Naive thymus-derived CD4-positive, alpha-beta T cell (primary cell): ENCODE measurements at regions of chr3 and their contacts with region 1.

Region 1: GRCh38 chr3:40476478-40477470 is at the start of gene ZNF619:
- DNase-seq: peak; percentile 11 to 60 (median 47)
- ATAC-seq: peak; percentile 93
- H3K4me3 ChIP-seq: peak within 1 kb of the TSS; percentile 82
- H3K4me3 Mint-ChIP-seq: peak within 1 kb of the TSS; percentile 84 to 97 (median 89)
- H3K27ac ChIP-seq: peak within 1 kb of the TSS; percentile 80
- H3K27ac Mint-ChIP-seq: peak within 1 kb of the TSS; percentile 61 to 97 (median 90)
- H3K4me1 ChIP-seq: peaks cover 7 to 8% of the 10 kb centered on the region in 2 donors
- H3K4me1 Mint-ChIP-seq: peaks cover 13 to 38% (median 31%) of the 10 kb centered on the region in 7 donors
- H3K27me3 ChIP-seq: no peaks in the 10 kb centered on the region
- H3K27me3 Mint-ChIP-seq: no peaks in the 10 kb centered on the region
- total RNA-seq, gene ZNF619: 5.0 to 13.9 (median 12.3) TPM

Region 2: DNA sequence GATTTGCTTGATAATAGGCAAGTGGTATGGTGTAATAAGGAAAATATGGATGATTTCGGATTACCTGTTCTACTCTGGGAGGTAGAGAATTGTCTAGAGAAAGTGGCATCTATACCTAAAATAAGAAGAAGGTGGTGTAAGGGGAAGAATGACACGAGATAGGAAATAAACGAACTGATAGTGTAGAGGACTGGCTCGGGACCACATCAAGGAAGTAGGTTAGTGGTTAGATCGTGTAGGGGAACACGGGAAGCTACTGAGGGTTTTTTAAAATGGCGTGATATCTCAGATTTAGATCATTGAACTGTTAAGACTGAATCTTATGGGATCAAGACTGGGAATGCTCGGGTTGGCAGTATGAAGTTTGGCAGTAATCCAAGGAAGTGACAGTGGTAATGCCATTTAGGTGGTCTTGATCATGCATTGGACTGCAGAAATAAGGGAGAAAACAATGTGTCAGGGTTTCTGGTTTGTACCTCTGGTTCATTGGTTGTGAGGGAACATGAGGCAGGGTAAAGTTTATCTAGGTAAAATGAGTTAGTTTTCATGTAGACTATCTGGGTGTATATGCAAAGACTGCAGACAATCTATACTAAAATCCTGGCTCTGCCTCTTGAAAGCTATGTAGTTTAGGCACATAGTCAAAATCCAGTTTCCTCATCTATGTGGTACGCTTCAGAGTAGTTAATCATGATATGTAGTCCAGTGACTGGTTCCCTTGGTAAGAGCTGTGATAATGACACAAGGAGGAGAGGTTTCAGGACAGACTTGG is 12.2 kb before region 1 on chr3:
- CTCF ChIA-PET with region 1: no interaction called
- POLR2A ChIA-PET with region 1: interaction called, 15 read pairs
- intact Hi-C with region 1: no loop called
- DNase-seq: peak in 7 of 9 donors; percentile 46 to 72 (median 65)
- ATAC-seq: peak; percentile 93
- H3K4me3 ChIP-seq: no peak overlapping the region
- H3K4me3 Mint-ChIP-seq: peak overlapping the region; percentile 6 to 67 (median 42)
- H3K27ac ChIP-seq: peak overlapping the region; percentile 43
- H3K27ac Mint-ChIP-seq: peak overlapping the region; percentile 35 to 90 (median 80)
- H3K4me1 ChIP-seq: peaks cover 13 to 20% of the 10 kb centered on the region in 2 donors
- H3K4me1 Mint-ChIP-seq: peaks cover 13 to 42% (median 34%) of the 10 kb centered on the region in 7 donors
- H3K27me3 ChIP-seq: no peaks in the 10 kb centered on the region
- H3K27me3 Mint-ChIP-seq: no peaks in the 10 kb centered on the region

Region 3: DNA sequence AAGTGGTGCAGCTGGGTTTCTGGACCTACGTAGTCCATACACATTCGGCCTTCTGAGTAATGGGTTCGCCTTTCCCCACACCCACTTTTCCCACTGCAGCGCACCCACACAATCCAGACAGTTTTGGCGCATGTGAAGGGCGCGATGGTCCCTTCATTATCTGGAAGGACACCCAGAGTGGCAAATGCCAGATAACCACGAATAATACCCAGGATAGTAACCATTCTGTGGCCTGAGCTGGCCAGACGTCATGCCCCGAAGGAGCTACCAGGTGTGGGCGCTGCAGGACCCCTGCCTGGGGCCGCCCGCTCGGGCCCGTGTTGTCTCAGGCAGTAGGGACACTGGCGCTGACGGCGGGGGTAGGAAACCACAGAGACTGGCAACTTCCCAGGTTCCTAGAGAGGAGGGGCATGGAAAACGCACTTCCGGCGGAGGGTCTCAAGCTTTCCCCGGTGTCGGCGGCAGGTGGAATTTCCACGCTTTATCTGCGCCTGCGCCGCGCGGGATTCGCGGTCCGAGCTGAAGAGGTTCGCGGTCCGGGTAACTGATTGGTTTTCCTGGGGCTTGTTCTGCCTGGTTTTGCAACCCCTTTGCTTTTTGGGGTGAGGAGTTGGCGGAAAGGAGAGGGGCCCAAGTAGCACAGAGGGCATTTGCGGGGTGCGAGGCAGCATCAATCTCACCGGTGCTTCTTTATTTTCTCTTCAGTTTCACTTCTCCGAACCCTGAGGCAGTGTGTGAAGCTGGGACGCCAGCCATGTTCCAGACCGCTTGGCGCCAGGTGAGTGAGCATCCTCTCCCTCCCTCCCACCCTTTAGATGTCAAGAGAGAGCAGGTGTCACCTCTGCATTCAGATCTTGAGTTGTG is 29.1 kb after region 1 on chr3 and contains the start of gene ZNF620:
- CTCF ChIA-PET with region 1: no interaction called
- POLR2A ChIA-PET with region 1: interaction called, 5 read pairs
- intact Hi-C with region 1: loop called (anchors 1 kb)
- DNase-seq: peak; percentile 11 to 57 (median 29)
- ATAC-seq: peak; percentile 82
- H3K4me3 ChIP-seq: peak within 1 kb of the TSS; percentile 88
- H3K4me3 Mint-ChIP-seq: peak within 1 kb of the TSS; percentile 86 to 98 (median 97)
- H3K27ac ChIP-seq: peak within 1 kb of the TSS; percentile 61
- H3K27ac Mint-ChIP-seq: peak within 1 kb of the TSS; percentile 67 to 94 (median 86)
- H3K4me1 ChIP-seq: peaks cover 5% of the 10 kb centered on the region in 2 donors
- H3K4me1 Mint-ChIP-seq: peaks cover 6 to 27% (median 9%) of the 10 kb centered on the region in 7 donors
- H3K27me3 ChIP-seq: no peaks in the 10 kb centered on the region
- H3K27me3 Mint-ChIP-seq: peaks cover 0 to 12% (median 0%) of the 10 kb centered on the region in 5 donors
- total RNA-seq, gene ZNF620: 1.3 to 6.4 (median 3.3) TPM

Region 4: GRCh38 chr3:40524568-40525285 is 48.0 kb after region 1 on chr3 and contains the start of gene ZNF621:
- CTCF ChIA-PET with region 1: no interaction called
- POLR2A ChIA-PET with region 1: interaction called, 7 read pairs
- intact Hi-C with region 1: loop called (anchors 1 kb)
- DNase-seq: peak; percentile 43 to 90 (median 73)
- ATAC-seq: peak; percentile 99
- H3K4me3 ChIP-seq: peak within 1 kb of the TSS; percentile 69
- H3K4me3 Mint-ChIP-seq: peak within 1 kb of the TSS; percentile 85 to 97 (median 96)
- H3K27ac ChIP-seq: peak within 1 kb of the TSS; percentile 81
- H3K27ac Mint-ChIP-seq: peak within 1 kb of the TSS; percentile 91 to 98 (median 97)
- H3K4me1 ChIP-seq: peaks cover 0 to 15% of the 10 kb centered on the region in 2 donors
- H3K4me1 Mint-ChIP-seq: peaks cover 17 to 39% (median 27%) of the 10 kb centered on the region in 7 donors
- H3K27me3 ChIP-seq: no peaks in the 10 kb centered on the region
- H3K27me3 Mint-ChIP-seq: no peaks in the 10 kb centered on the region
- total RNA-seq, gene ZNF621: 14.6 to 26.9 (median 21.9) TPM